Endothelial cell of umbilical vein (primary cell): ENCODE measurements at regions of chr3 and their contacts with region 1.

Region 1: DNA sequence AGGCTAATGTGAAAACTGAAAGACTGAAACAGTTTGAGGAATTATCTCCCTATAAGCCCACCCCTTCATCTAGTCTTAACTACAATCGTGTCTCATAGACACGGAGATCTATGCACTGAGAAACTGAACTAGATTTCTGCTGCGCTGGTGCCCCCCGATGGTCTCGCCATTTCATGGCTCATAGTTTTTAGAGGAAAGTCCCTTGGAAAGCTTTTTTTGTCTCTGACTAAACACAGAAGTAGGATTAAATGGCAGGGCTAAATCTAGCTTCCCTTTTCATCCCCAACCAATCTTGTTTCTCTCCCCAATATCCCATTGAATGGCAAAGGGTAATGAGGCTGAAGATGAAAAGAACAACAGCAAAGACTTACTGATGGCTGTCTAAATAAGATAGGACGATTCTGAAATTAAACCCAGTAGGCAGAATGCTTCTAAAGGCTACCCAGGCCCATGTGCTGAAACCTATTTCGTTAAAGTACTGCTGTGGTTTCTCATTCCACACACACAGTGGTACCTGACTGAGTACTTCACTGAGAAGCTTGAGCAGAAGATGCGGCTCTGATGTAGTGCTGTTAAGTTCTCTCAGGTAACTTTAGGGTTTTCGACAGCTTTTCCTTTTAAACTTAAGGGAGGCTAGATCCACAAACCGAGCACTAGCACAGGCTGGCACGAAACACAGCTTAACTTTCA is 142.7 kb downstream of the GADL1 start:
- DNase-seq: peak; percentile 78
- H3K4me3 ChIP-seq: no peak overlapping the region
- H3K27ac ChIP-seq: no peak overlapping the region
- H3K4me1 ChIP-seq: peaks cover 21% of the 10 kb centered on the region
- H3K27me3 ChIP-seq: no peaks in the 10 kb centered on the region
- CTCF ChIP-seq: peak; percentile 49 to 65
- POLR2A ChIP-seq: no peak

Region 2: DNA sequence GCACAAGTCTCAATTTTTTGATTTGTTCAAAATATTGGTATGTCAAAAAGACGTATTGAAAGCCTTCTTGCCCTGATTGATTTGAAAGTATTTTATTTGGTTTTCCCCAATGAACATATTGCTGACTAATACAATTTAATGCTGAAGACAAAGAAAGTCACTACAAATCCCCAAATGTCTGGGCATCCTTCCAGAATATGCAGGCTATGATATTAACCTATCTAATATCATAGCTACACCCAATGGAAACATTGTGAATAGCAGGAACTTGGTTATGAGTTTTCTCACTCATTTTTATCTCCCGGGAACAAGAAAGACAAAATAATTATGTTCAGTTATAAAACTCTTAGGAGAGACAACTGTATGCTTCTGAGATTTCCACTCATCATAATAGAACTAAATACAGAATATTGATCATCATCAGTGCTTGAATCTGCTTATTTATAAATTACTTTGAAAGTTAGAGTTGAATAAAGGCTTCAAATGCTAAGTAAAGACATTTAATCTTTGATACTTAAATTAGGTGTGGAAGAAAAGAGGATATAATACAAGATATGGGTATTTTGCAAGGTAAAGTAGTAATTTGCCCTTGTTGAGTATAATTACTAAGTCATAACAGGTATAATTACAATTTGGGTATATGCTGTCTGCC is 987.0 kb before region 1 on chr3:
- CTCF ChIA-PET with region 1: interaction called, 4 read pairs
- POLR2A ChIA-PET with region 1: no interaction called
- dilution Hi-C with region 1: no loop called
- intact Hi-C with region 1: loop called (anchors 10 kb)
- DNase-seq: peak; percentile 83
- H3K4me3 ChIP-seq: no peak overlapping the region
- H3K27ac ChIP-seq: no peak overlapping the region
- H3K4me1 ChIP-seq: peaks cover 14% of the 10 kb centered on the region
- H3K27me3 ChIP-seq: no peaks in the 10 kb centered on the region
- CTCF ChIP-seq: peak; percentile 36 to 47
- POLR2A ChIP-seq: no peak

Region 3: GRCh38 chr3:30012941-30013543 is 738.7 kb before region 1 on chr3:
- CTCF ChIA-PET with region 1: interaction called, 170 read pairs
- POLR2A ChIA-PET with region 1: no interaction called
- dilution Hi-C with region 1: no loop called
- intact Hi-C with region 1: loop called (anchors 1 kb)
- DNase-seq: peak; percentile 76
- H3K4me3 ChIP-seq: no peak overlapping the region
- H3K27ac ChIP-seq: no peak overlapping the region
- H3K4me1 ChIP-seq: peaks cover 5% of the 10 kb centered on the region
- H3K27me3 ChIP-seq: no peaks in the 10 kb centered on the region
- CTCF ChIP-seq: peak; percentile 55 to 56
- POLR2A ChIP-seq: no peak

Region 4: DNA sequence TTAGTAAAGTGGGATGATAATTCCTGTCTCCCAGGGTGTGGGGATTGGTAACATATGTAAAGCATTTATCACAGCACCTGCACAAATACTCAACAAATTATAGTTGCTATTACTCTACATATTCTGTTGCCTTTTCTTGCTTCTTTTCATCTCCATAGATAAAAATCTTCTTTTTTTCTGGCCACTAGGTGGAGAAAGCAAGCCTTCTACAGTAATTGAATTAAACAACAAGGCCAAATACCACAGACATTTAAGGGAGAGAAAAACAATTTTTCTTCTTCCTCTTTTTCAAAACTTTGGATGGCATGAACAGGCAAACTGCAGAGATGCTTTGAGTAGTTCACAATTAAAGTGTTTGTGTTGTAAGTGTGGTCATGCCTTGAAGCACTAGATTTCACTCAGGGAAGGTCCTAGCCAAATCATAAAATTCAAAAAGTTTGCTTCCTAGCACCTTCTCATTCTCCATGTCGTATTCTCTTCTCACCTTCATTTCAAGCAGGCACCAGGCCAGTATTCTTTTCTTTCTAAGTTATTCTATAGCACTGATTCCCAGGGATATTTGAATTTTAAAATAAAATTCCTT is 638.8 kb before region 1 on chr3:
- CTCF ChIA-PET with region 1: interaction called, 16 read pairs
- POLR2A ChIA-PET with region 1: no interaction called
- dilution Hi-C with region 1: no loop called
- intact Hi-C with region 1: loop called (anchors 1 kb)
- DNase-seq: peak; percentile 76
- H3K4me3 ChIP-seq: no peak overlapping the region
- H3K27ac ChIP-seq: no peak overlapping the region
- H3K4me1 ChIP-seq: no peaks in the 10 kb centered on the region
- H3K27me3 ChIP-seq: peaks cover 0 to 2% of the 10 kb centered on the region in 2 experiments
- CTCF ChIP-seq: peak; percentile 26 to 37
- POLR2A ChIP-seq: no peak

Region 5: GRCh38 chr3:30737743-30738499 is 13.8 kb before region 1 on chr3:
- CTCF ChIA-PET with region 1: interaction called, 11 read pairs
- POLR2A ChIA-PET with region 1: no interaction called
- dilution Hi-C with region 1: no loop called
- intact Hi-C with region 1: no loop called
- DNase-seq: no peak
- H3K4me3 ChIP-seq: no peak overlapping the region
- H3K27ac ChIP-seq: no peak overlapping the region
- H3K4me1 ChIP-seq: no peaks in the 10 kb centered on the region
- H3K27me3 ChIP-seq: no peaks in the 10 kb centered on the region
- CTCF ChIP-seq: no peak
- POLR2A ChIP-seq: no peak